ENCODE measurements at regions of chr5 and their contacts with region 1.

Region 1: DNA sequence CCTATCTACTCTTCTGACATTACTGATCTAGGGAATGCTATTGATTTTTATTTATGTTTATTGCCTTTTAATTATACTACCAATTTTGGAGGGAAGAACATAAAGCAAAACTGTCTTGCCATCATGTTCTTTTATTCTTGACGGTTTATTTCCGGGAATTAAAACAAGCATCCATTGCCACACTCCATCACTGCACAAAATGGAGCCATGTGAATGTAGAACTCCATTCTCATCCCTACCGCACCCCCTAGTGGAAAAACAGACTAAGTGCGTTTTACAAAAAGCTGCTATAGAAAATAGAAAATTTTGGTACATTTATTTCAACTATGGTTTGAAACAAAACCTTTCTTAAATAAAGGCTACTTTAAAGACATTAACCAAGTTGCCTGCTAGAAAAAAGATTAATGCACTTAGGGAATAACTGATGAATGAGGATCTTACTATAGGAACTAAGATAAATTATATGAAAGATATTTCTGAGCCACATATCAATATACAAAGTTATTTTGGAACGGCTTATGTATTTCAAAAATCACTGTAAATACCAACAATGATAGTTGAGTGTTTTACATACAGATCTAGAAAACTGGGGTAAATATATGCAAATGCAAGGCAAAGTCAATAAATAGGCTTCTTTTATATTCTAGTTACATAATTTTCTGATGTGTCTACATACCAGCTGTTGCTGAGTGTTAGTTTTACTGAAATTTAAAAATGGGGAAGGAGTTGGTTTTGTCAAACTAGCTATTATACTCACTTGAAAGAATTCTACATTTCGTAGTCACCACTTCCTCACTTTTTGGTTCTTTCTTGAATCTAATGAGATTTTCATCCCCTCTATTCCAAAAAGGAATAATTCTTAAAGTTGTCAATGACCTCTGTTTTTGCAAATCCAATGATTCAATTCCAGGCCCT is 26.5 kb downstream of the OXCT1 start:
- DNase-seq: peak in 1 of 5 donors; percentile 45
- H3K4me3 ChIP-seq: no peak overlapping the region
- H3K27ac ChIP-seq: no peak overlapping the region
- H3K4me1 ChIP-seq: no peaks in the 10 kb centered on the region
- H3K27me3 ChIP-seq: no peaks in the 10 kb centered on the region
- CTCF ChIP-seq: peak; percentile 56 to 81 (median 80)
- EP300 ChIP-seq: no peak
- POLR2A ChIP-seq: no peak

Region 2: DNA sequence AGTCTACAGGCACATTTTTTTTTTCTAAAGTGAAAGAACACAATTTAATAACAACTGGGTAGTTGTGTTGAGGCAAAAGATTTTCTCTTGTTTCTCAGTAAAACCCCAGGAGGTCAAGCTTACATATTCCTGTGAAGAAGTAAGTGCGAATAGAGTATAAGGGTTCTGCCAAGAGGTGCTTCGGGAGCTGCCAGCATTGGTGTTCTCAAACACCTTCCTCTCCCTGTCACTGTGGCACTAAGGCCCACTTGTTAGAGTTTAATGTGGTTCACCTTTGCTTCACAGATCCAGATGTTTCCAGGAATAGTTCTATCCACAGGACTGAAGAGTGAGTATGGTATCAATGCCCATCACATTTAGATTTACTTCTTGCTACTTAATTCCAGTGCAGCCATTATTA is 538.7 kb before region 1 on chr5:
- intact Hi-C with region 1: no loop called
- DNase-seq: no peak
- H3K4me3 ChIP-seq: no peak overlapping the region
- H3K27ac ChIP-seq: no peak overlapping the region
- H3K4me1 ChIP-seq: no peaks in the 10 kb centered on the region
- H3K27me3 ChIP-seq: peaks cover 2% of the 10 kb centered on the region
- CTCF ChIP-seq: no peak
- EP300 ChIP-seq: no peak
- POLR2A ChIP-seq: no peak

Region 3: DNA sequence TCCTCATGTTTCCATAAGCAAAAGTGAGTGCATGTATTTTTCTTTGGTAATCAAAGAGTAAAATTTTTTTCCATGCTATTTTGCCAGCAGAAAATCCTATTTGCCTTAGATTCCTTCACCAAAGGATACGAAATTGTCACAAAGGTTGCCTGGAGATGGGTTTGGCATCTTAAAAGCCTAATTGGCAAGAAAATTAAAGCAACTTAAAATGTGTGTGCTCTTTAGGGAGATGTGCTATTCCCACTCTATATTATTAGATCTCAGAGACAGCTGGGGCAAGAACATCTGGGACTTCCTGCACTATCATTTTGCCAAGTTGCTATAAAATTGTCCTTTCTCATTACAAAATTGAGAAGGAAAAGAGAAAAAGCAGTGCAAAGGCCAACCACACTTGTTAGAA is 479.4 kb before region 1 on chr5:
- intact Hi-C with region 1: no loop called
- DNase-seq: no peak
- H3K4me3 ChIP-seq: no peak overlapping the region
- H3K27ac ChIP-seq: no peak overlapping the region
- H3K4me1 ChIP-seq: no peaks in the 10 kb centered on the region
- H3K27me3 ChIP-seq: no peaks in the 10 kb centered on the region
- CTCF ChIP-seq: no peak
- EP300 ChIP-seq: no peak
- POLR2A ChIP-seq: no peak

Region 4: GRCh38 chr5:41510176-41510831 is 333.4 kb before region 1 on chr5 and contains the start of gene PLCXD3:
- intact Hi-C with region 1: loop called in 1 of 4 experiments (anchors 10 kb)
- DNase-seq: peak; percentile 54 to 70 (median 66)
- H3K4me3 ChIP-seq: peak within 1 kb of the TSS; percentile 50
- H3K27ac ChIP-seq: peak within 1 kb of the TSS; percentile 56 to 73
- H3K4me1 ChIP-seq: no peaks in the 10 kb centered on the region
- H3K27me3 ChIP-seq: no peaks in the 10 kb centered on the region
- CTCF ChIP-seq: no peak
- EP300 ChIP-seq: no peak
- POLR2A ChIP-seq: no peak
- total RNA-seq, gene PLCXD3: 19.5 to 69.5 (median 36.8) TPM

Region 5: DNA sequence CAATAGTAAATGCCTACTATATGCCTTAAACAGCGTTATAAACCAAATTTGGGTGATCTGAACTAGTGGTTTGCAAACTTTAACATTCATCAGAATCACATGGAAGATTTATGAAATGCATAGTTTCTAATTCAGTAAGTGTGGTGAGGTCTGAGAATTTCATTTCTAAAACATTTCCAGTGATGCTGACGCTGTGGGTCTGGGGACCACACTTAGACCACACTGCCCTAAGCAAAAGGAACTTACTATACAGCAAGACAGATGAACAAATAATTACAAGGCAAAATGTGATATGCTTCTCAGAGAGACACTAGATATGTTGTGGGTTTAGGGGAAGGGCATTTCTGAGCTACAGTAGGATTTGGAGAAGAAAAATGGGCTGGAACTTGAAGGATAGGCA is 46.1 kb before region 1 on chr5:
- intact Hi-C with region 1: loop called in 1 of 4 experiments (anchors 2 kb)
- DNase-seq: no peak
- H3K4me3 ChIP-seq: no peak overlapping the region
- H3K27ac ChIP-seq: no peak overlapping the region
- H3K4me1 ChIP-seq: peaks cover 10% of the 10 kb centered on the region
- H3K27me3 ChIP-seq: no peaks in the 10 kb centered on the region
- CTCF ChIP-seq: no peak
- EP300 ChIP-seq: no peak
- POLR2A ChIP-seq: no peak

Measured in ovary (tissue), 10 donors.